Cardiac septum (tissue), 1 donor: ENCODE measurements at regions of chr3 and their contacts with region 1.

Region 1: DNA sequence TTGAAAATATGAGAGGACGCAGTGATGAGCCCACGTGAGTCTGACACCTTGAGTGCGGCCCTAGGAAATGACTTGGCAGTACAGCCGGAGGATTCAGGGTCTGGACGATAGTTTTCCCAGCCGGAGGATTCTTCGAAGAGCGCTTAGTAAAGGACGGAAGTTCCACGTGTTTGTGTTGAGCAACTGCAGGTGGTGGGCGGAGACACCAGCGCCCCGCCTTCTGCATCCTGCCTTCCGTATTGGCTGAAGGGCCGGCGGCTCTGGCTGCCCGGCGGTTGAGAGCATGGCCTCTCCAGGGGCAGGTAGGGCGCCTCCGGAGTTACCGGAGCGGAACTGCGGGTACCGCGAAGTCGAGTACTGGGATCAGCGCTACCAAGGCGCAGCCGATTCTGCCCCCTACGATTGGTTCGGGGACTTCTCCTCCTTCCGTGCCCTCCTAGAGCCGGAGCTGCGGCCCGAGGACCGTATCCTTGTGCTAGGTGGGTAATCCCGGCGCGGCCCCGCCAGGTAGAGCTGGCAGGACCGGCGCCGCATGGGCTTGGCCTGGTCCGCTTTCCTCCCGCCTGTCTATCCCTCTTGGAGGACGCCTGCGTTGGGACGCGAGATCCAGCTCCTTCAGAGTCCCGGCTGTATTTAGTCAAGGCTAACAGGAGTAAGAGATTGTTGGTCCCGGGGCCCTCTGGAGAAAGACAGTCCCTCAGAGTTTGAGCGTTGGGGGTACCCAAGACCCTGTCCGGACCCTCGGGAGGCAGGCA is at the start of gene EEF1AKMT4:
- DNase-seq: peak; percentile 95
- total RNA-seq, gene EEF1AKMT4: 1.5 TPM

Region 2: DNA sequence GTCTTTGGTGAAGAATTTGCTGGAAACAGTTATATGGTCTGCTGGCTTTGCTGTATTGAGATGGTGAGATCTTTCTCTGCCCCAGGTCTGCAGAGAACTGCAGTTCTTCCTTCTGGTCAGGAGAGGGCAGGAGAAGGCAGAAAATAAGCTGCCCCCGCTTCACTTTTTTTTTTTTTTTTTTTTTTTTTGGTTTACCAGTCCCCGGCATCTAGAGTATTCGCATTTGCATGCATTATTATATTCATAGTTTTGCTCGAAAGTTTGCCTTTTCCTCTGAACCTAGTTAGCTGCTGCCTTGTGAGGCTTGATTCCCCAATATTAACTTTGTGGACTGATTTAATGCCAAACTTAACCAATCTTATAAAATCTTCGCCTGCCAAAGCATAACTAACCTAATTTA is 354.3 kb before region 1 on chr3:
- intact Hi-C with region 1: loop called (anchors 5 kb)
- DNase-seq: no peak

Region 3: DNA sequence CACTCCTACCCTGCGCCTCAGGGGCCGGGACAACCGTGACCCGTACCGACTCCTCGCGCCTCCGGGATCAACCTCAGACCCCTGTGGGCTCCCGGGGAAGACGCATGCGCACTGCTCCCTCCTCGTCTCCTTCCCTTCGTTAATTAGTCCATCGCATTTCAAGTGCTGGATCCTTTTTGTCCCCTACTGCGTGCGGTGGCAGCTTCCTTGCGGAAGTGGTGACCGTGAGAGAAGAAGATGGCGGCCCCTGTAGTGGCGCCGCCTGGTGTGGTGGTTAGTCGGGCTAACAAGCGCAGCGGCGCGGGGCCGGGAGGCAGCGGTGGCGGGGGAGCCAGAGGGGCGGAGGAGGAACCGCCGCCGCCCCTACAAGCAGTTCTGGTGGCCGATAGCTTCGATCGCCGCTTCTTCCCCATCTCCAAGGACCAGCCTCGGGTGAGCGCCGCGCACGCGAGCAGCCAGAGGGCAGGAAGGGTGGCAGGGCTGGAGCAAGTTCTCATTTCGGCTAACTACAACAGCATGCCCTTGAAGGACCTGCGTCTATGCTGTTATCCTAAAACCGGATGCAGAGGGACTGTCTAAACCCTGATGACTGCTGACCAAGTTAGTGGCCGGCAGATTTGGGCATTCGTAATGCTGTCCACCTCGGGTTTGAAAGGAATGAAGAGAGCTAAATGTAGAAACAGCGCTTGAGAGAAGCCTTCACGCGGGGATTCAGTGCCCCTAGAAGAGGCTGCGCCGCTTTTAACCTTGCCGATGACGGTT is 114.3 kb before region 1 on chr3 and contains the start of gene EIF2B5:
- intact Hi-C with region 1: loop called (anchors 1 kb)
- DNase-seq: peak; percentile 96
- total RNA-seq, gene EIF2B5: 33.4 TPM

Region 4: DNA sequence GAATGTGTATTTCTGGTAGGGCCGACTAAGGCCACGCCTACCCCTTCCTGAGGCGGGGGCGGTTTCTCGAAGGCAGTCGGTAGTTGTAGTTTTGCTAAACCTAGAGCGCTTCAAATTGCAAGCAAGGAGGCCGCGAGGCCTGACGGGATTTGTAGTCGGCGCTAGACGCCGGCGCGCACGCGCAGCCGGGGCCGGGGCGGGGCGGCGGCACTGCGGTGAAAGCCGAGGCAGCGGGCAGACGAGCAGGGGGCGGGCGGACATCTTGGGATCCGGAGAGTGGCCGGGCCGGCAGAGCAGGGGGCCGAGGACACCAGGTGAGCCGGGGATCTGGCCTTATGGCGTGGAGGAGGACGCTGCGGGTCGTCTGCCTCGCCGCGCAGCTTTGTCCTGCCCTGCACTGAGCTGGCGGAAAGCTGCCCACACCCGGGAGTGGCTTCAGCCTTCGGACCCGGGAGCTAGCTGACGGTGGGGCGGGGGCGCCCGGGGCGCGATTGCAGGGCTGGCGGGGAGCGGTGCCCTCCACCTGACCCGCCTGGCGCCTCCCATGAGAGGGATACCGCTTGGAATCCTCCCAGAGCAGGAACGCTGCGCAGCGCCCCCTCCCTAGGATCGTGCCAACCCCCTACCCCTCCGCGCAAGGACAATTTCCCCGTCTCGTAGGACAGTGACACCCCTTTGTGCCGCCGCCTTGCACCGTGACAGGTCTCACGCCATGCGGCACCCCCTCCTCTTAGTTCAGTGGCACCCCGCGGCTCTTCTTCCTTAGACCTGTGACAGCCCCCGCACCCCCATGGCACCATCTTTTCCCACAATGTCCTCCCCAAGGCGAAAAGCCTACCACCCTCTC is 74.7 kb before region 1 on chr3 and contains the start of gene AP2M1:
- intact Hi-C with region 1: loop called (anchors 2 kb)
- DNase-seq: peak; percentile 99
- total RNA-seq, gene AP2M1: 317 TPM

Region 5: DNA sequence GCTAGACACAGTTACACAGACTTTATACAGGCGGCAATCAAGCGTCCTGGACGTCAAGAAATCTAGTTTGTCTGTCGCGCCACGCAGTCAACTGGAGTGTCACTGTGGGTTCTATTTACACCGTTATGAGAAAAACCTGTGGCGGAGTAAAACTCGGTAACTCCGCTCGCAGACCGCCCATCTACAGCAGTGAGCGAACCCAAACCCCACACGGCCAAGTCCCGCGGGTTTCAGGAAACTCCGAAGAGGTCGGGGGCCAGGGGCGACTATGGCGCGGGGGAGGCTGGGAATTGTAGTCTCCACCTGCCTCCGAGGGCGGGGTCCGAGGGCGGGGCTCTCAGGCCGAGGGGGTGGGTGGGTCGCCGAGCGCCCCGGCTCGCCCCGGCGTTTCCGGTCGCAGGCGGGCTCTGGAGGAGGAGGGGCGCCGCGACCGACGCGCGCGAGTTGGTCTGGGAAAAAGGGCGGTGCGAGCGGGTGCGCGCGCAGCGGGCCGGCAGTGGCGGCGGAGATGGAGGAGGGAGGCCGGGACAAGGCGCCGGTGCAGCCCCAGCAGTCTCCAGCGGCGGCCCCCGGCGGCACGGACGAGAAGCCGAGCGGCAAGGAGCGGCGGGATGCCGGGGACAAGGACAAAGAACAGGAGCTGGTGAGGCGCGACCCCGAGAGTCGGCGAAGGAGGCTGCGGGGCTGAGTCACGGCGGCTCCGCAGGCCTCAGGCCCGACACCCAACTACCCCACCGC is 49.3 kb after region 1 on chr3 and contains the start of gene PSMD2:
- intact Hi-C with region 1: loop called (anchors 1 kb)
- DNase-seq: peak; percentile 98
- total RNA-seq, gene PSMD2: 217 TPM